Heart left ventricle (tissue), 16 donors: ENCODE measurements at regions of chr2 and their contacts with region 1.

Region 1: GRCh38 chr2:120914839-120915521 is 179.3 kb downstream of the GLI2 start:
- DNase-seq: peak; percentile 83 to 91 (median 88)
- ATAC-seq: peak; percentile 85 to 93 (median 89)
- H3K4me3 ChIP-seq: no peak overlapping the region
- H3K27ac ChIP-seq: peak overlapping the region in 11 of 12 donors; percentile 67 to 91 (median 80)
- H3K4me1 ChIP-seq: peaks cover 3 to 59% (median 35%) of the 10 kb centered on the region in 12 donors
- H3K27me3 ChIP-seq: no peaks in the 10 kb centered on the region
- CTCF ChIP-seq: peak in 5 of 12 donors; percentile 21 to 47 (median 27)
- POLR2A ChIP-seq: no peak

Region 2: GRCh38 chr2:120939595-120940318 is 24.8 kb after region 1 on chr2:
- intact Hi-C with region 1: loop called in 1 of 10 experiments (anchors 2 kb)
- DNase-seq: no peak
- ATAC-seq: peak in 2 of 4 donors; percentile 19 to 29
- H3K4me3 ChIP-seq: no peak overlapping the region
- H3K27ac ChIP-seq: no peak overlapping the region
- H3K4me1 ChIP-seq: peaks cover 0 to 37% (median 7%) of the 10 kb centered on the region in 12 donors
- H3K27me3 ChIP-seq: no peaks in the 10 kb centered on the region
- CTCF ChIP-seq: no peak
- POLR2A ChIP-seq: no peak